Lower lobe of right lung (tissue), 2 donors: ENCODE measurements at regions of chr10 and their contacts with region 1.

Region 1: GRCh38 chr10:59580026-59580863 is 129.4 kb downstream of the SLC16A9 start:
- DNase-seq: no peak
- ATAC-seq: no peak
- H3K4me3 ChIP-seq: no peak overlapping the region
- H3K27ac ChIP-seq: no peak overlapping the region
- H3K4me1 ChIP-seq: no peaks in the 10 kb centered on the region
- H3K27me3 ChIP-seq: no peaks in the 10 kb centered on the region
- CTCF ChIP-seq: peak; percentile 48

Region 2: GRCh38 chr10:59240582-59241183 is 339.6 kb before region 1 on chr10:
- intact Hi-C with region 1: loop called (anchors 5 kb)
- DNase-seq: no peak
- ATAC-seq: no peak
- H3K4me3 ChIP-seq: no peak overlapping the region
- H3K27ac ChIP-seq: no peak overlapping the region
- H3K4me1 ChIP-seq: no peaks in the 10 kb centered on the region
- H3K27me3 ChIP-seq: no peaks in the 10 kb centered on the region
- CTCF ChIP-seq: peak; percentile 63